Adrenal gland (tissue), 19 donors: ENCODE measurements at regions of chr17 and their contacts with region 1.

Region 1: DNA sequence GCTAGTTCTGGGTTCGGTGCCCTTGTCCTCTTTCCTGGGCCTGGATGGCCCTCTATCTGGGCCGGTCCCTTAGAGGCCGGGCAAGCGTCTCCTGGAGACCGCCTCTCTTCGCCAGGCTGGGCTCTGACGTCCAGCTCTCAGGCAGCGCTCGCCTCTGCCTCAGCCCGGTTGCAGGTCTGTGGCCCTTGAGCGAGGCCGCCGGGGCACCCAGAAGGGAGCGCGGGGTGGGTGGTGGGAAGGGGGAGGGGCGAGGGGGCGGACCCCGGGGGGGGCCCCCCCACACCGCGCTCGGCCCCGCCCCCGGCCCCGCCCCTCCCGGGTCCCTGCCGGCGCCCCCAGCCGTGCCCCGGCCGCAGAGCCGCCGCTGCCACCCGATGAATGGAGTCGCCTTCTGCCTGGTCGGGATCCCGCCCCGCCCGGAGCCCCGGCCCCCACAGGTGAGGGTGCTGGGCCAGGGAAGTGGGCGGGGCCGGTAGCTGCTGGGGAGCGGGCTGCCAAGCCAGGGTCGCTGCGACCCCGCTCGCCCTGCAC is at the start of gene ARHGAP23:
- DNase-seq: peak; percentile 85 to 93 (median 90)
- H3K4me3 ChIP-seq: peak within 1 kb of the TSS; percentile 80 to 92 (median 88)
- H3K27ac ChIP-seq: peak within 1 kb of the TSS; percentile 74 to 95 (median 91)
- H3K4me1 ChIP-seq: peaks cover 32 to 52% of the 10 kb centered on the region in 2 donors
- H3K27me3 ChIP-seq: no peaks in the 10 kb centered on the region
- CTCF ChIP-seq: no peak
- POLR2A ChIP-seq: peak in 1 of 2 donors; percentile 63
- total RNA-seq, gene ARHGAP23: 4.4 to 71.9 (median 29.2) TPM

Region 2: GRCh38 chr17:38584350-38584925 is 156.3 kb after region 1 on chr17:
- intact Hi-C with region 1: loop called in 1 of 2 experiments (anchors 10 kb)
- DNase-seq: peak; percentile 58 to 81 (median 65)
- H3K4me3 ChIP-seq: no peak overlapping the region
- H3K27ac ChIP-seq: peak overlapping the region in 1 of 5 donors; percentile 65
- H3K4me1 ChIP-seq: no peaks in the 10 kb centered on the region
- H3K27me3 ChIP-seq: peaks cover 24% of the 10 kb centered on the region
- CTCF ChIP-seq: peak; percentile 86 to 98 (median 90)
- POLR2A ChIP-seq: no peak